Mammary epithelial cell (primary cell): ENCODE measurements at regions of chr6 and their contacts with region 1.

Region 1: DNA sequence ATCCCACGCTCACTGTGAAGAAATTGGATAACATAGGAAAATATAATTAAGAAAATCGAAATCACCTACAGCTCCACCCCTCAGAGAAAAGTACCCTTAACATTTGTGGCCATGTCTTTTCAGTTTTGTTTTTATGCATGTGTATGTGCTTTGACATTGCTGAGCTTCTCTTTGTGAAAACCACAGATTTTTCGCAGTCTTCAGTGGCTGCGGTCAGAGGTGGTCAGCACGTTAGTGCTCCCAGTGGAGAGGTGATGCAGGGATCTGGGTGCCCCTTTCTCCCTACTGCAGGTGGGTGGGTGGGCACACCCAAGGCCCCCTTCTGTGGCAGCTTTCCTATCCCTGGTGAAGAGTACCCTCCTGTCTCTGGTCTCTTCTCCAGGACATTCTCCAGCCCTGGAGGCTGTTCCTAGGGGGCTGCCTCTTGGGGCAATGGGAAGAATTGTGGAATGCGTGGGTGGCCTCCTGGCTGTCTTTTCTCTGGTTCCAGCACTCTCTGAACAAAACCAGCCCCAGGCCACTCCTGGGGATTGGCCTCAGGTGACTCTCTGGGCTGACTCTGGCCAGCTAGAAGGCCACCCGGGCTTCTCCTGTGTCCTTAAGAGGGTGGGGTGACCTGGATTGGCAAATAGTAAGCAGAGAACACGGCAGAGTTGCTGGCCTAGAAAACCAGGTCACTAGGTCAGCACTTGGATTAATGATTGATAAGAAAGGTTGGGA is 49.8 kb upstream of the FANCE start:
- DNase-seq: no peak
- H3K4me3 ChIP-seq: no peak overlapping the region
- H3K27ac ChIP-seq: peak overlapping the region; percentile 97
- H3K4me1 ChIP-seq: peaks cover 39% of the 10 kb centered on the region
- H3K27me3 ChIP-seq: no peaks in the 10 kb centered on the region
- CTCF ChIP-seq: no peak

Region 2: DNA sequence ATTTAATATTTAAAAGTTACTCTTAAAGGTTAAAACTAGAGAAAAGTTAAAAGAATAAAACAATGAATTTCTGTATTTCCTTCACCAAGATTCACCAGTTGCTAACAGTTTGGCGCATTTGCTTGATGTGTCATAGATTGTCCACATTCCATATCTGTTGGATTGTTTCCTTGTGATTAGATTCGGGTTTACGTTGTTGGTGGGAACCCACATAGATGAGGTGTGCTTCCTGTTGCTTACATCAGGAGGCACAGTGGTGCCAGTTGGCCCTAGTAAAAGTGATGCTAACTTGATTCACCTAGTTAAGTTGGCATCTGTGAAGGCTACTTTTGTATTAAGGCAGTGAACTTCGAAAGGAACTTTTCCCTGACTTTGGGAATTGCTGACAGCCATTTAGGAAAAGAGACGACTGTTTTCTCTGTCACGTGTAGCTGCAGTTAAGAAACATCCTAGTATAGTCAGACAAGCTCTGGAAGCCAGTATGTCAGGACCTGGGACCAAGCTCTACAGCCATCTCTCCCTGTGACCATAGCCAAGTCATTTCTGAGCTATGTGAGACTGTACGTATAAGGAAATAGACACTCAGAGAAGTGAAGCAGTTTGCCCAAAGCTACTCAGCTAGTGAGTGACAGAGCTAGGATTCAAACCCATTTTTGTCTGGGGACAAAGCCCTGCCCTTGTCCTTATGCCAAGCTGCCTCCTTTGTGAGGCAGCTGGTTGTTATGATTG is 10.9 kb before region 1 on chr6:
- CTCF ChIA-PET with region 1: interaction called, 4 read pairs
- dilution Hi-C with region 1: no loop called
- in situ Hi-C with region 1: no loop called
- intact Hi-C with region 1: loop called (anchors 1 kb)
- DNase-seq: peak; percentile 97
- H3K4me3 ChIP-seq: no peak overlapping the region
- H3K27ac ChIP-seq: peak overlapping the region; percentile 96
- H3K4me1 ChIP-seq: peaks cover 51% of the 10 kb centered on the region
- H3K27me3 ChIP-seq: no peaks in the 10 kb centered on the region
- CTCF ChIP-seq: peak; percentile 4 to 50

Region 3: DNA sequence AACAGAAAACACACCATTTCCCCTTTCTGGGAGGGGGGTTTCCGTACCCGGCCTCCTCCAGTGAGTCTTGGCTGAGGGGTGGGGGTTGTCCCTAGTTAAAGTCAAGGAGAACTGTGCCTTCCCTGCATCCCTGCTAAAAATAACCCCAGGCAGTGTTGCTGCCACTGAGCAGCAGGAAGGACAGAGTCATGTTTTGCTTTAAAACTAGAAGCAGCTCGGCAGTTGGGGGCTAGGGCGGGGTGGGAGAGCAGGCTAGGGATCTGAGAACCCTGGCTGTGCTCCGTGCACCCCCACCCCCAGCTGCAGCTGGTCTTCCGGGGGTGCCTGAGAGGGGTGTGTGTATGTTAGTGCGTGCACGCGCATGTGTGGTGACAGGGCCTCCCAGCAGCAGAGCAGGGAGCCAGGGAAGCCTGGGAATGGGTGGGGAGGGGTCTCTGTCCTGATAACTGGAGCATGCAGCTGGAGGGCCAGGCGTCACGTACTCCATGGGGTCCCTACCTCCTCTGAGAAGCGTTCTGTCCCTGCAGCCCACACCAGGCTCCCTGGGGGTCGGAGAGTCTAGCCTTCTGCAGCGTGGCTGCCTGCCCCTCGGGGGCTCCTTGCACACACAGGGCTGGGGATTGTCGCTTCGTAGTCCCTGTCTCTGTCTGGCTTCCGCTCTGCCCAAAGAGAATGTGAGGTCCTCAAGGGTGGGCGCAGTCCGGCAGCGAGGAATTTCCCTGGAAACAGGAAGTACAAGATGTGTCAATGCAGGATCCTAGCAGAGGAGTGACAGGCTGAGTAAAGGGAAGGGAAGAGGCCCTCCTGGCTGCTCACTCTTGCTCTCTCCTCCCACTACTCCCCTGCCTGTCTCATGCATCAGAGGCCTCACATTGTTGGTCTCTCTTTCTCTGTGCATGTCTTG is 317.8 kb after region 1 on chr6:
- CTCF ChIA-PET with region 1: no interaction called
- dilution Hi-C with region 1: no loop called
- in situ Hi-C with region 1: no loop called
- intact Hi-C with region 1: no loop called
- DNase-seq: no peak
- H3K4me3 ChIP-seq: no peak overlapping the region
- H3K27ac ChIP-seq: no peak overlapping the region
- H3K4me1 ChIP-seq: peaks cover 4% of the 10 kb centered on the region
- H3K27me3 ChIP-seq: no peaks in the 10 kb centered on the region
- CTCF ChIP-seq: no peak